ENCODE measurements at regions of chr16 and their contacts with region 1.

Region 1: DNA sequence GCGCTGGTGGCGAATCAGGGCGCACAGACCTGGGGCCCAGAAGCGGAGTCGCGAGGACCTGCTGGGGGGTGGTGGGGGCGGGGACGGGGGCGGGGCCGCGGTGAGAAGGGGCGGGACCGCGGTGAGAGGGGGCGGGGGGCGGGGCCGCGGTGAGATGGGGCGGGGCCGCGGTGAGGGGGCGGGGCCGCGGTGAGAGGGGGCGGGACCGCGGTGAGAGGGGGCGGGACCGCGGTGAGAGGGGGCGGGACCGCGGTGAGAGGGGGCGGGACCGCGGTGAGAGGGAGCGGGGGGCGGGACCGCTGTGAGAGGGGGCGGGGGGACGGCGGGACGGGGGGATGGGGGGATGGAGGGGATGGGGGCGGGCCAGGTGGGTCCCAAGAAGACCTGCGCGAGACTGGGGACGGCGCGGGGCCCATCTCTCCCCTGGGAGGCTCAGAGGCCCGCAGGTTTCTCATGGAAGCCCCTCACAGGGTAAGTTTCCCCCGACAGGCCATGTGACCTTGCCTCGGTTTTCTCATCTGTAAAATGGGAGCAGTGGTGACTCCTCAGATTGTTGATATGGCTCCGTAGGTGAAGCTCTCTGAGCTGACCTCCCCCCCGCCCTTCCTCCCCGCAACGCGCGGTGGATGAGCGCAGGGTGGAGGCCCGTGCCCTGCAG is 28.6 kb upstream of the DBNDD1 start:
- DNase-seq: peak; percentile 59 to 80 (median 77)
- H3K4me3 ChIP-seq: peak overlapping the region; percentile 42
- H3K27ac ChIP-seq: peak overlapping the region; percentile 65 to 83
- H3K4me1 ChIP-seq: peaks cover 6% of the 10 kb centered on the region
- H3K27me3 ChIP-seq: no peaks in the 10 kb centered on the region
- CTCF ChIP-seq: no peak
- EP300 ChIP-seq: no peak
- POLR2A ChIP-seq: no peak

Region 2: GRCh38 chr16:90081606-90081970 is 33.7 kb after region 1 on chr16:
- intact Hi-C with region 1: loop called in 1 of 4 experiments (anchors 2 kb)
- DNase-seq: no peak
- H3K4me3 ChIP-seq: no peak overlapping the region
- H3K27ac ChIP-seq: no peak overlapping the region
- H3K4me1 ChIP-seq: peaks cover 2% of the 10 kb centered on the region
- H3K27me3 ChIP-seq: no peaks in the 10 kb centered on the region
- CTCF ChIP-seq: no peak
- EP300 ChIP-seq: no peak
- POLR2A ChIP-seq: no peak